ENCODE measurements at regions of chr10 and their contacts with region 1.

Region 1: DNA sequence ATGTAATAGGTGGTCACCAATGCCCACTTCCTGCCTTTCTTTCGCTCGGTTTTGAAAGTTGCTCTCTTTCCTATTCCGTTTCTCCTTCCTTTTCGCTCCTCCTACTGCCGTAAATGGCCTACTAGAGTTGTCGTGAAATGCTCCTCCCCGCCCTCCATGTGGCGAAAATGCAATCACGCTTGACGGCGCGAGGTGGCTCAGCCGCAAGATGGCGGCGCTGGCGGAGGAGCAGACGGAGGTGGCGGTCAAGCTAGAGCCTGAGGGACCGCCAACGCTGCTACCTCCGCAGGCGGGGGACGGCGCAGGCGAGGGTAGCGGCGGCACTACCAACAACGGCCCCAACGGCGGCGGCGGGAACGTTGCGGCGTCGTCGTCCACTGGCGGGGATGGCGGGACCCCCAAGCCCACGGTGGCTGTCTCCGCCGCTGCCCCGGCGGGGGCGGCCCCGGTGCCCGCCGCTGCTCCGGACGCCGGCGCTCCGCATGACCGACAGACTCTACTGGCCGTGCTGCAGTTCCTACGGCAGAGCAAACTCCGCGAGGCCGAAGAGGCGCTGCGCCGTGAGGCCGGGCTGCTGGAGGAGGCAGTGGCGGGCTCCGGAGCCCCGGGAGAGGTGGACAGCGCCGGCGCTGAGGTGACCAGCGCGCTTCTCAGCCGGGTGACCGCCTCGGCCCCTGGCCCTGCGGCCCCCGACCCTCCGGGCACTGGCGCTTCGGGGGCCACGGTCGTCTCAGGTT is at the start of gene TAF5:
- DNase-seq: peak; percentile 95
- ATAC-seq: peak; percentile 61
- H3K4me3 Mint-ChIP-seq: peak within 1 kb of the TSS; percentile 81
- H3K27ac Mint-ChIP-seq: peak within 1 kb of the TSS; percentile 85
- H3K4me1 Mint-ChIP-seq: peaks cover 16% of the 10 kb centered on the region
- H3K27me3 Mint-ChIP-seq: no peaks in the 10 kb centered on the region
- total RNA-seq, gene TAF5: 11.2 to 11.4 TPM

Region 2: DNA sequence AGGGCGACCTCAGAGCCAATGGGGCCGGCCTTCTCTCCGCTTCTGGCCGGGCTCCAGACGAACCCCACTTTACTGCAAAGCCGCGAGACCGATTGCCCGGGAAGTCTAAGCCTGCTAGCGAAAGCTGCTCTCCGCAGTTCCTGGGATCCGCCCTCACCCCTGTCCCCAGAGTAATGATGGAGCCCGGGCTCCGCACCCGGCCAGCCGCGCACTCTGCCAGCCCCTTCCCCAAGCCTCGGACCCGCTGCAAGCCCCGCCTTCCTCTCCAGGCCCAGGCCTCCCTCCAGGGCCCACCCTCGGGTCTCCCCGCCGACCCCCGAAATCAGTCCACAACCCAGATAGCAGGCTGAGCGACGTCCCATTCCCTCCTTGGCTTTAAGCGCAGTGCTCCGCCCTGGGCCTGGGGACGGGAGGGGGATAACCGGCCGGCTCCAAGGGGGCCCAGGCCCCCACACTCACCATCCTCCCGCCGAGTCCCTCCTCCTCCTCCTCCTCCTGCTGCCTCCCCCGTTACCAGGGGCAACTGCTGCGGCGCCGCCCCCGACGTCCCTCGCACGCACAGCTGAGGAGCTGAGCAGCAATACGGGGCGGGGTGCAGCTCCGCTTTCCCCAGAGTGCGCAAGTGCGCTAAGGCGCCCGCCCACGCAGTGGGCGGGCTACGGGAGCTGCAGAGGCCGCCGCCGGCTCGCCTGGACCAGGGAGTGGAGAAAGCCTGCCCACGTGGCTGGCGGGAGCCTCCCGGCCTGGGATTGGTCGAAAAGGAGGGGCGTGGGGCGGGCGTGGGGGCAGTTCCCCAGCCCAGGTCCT is 653.9 kb before region 1 on chr10 and contains the start of gene ARL3:
- CTCF ChIA-PET with region 1: no interaction called
- POLR2A ChIA-PET with region 1: no interaction called
- intact Hi-C with region 1: loop called in 1 of 2 experiments (anchors 2 kb)
- DNase-seq: peak; percentile 99
- ATAC-seq: peak; percentile 90
- H3K4me3 Mint-ChIP-seq: peak within 1 kb of the TSS; percentile 82
- H3K27ac Mint-ChIP-seq: peak within 1 kb of the TSS; percentile 81
- H3K4me1 Mint-ChIP-seq: peaks cover 59% of the 10 kb centered on the region
- H3K27me3 Mint-ChIP-seq: no peaks in the 10 kb centered on the region
- total RNA-seq, gene ARL3: 6.4 to 6.9 TPM

Region 3: GRCh38 chr10:103215601-103216000 is 152.3 kb before region 1 on chr10:
- CTCF ChIA-PET with region 1: no interaction called
- POLR2A ChIA-PET with region 1: no interaction called
- intact Hi-C with region 1: no loop called
- DNase-seq: no peak
- ATAC-seq: no peak
- H3K4me3 Mint-ChIP-seq: no peak overlapping the region
- H3K27ac Mint-ChIP-seq: no peak overlapping the region
- H3K4me1 Mint-ChIP-seq: no peaks in the 10 kb centered on the region
- H3K27me3 Mint-ChIP-seq: peaks cover 2% of the 10 kb centered on the region

Region 4: GRCh38 chr10:103350501-103351260 is 17.3 kb before region 1 on chr10 and contains the start of gene PCGF6:
- CTCF ChIA-PET with region 1: interaction called, 4 read pairs
- POLR2A ChIA-PET with region 1: no interaction called
- intact Hi-C with region 1: loop called (anchors 1 kb)
- DNase-seq: peak; percentile 83
- ATAC-seq: peak; percentile 86
- H3K4me3 Mint-ChIP-seq: peak within 1 kb of the TSS; percentile 86
- H3K27ac Mint-ChIP-seq: peak within 1 kb of the TSS; percentile 84
- H3K4me1 Mint-ChIP-seq: peaks cover 9% of the 10 kb centered on the region
- H3K27me3 Mint-ChIP-seq: no peaks in the 10 kb centered on the region
- total RNA-seq, gene PCGF6: 10.4 to 14.8 TPM

Measured in activated CD4-positive, alpha-beta T cell treated with anti-CD3 and anti-CD28 coated beads for 36 hours (primary cell).